ENCODE measurements at regions of chr20 and their contacts with region 1.

Region 1: GRCh38 chr20:34102342-34102741 is 9.7 kb downstream of the EIF2S2 start:
- DNase-seq: no peak

Region 2: DNA sequence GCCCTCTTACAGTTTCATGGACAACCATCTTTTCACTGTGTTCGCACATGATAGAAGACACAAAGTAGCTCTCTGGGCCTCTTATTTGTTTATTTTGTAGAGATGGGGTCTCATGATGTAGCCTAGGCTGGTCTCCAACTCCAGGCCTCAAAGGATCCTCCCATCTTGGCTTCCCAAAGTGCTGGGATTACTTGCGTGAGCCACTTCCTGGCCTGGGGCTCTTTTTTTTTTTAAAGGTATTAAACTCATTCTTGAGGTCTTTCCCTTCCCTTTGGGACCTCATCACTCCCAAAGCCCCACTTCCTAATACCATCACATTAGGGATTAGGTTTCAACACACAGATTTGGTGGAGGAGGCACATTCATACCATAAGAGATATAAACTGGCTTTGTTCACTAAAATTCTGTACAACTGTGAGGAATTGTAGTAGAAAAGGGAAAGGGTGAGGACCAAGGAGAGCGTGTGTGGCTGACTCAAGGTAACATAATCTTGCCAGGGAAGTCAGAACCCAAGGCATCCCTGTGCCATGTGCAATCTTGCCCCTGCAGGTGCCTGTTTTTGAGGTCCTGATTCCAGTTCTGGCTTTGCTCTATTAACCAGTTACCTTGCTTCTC is 35.8 kb before region 1 on chr20:
- intact Hi-C with region 1: no loop called
- DNase-seq: no peak

Region 3: DNA sequence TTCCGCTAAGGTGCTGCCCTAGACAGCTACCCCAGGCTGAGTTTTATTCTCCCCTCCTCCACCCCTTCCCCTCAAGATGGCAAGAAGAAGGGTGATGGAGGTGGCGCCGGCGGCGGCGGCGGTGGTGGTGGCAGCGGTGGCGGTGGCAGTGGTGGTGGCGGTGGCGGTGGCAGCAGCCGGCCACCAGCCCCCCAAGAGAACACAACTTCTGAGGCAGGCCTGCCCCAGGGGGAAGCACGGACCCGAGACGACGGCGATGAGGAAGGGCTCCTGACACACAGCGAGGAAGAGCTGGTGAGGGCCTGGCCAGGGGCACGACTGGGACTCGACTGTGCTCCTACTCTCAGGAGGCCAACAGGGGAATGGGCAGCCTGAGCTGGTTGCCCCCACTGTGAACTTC is 25.4 kb before region 1 on chr20:
- intact Hi-C with region 1: loop called in 1 of 2 experiments (anchors 1 kb)
- DNase-seq: no peak